ENCODE measurements at regions of chr20 and their contacts with region 1.

Region 1: DNA sequence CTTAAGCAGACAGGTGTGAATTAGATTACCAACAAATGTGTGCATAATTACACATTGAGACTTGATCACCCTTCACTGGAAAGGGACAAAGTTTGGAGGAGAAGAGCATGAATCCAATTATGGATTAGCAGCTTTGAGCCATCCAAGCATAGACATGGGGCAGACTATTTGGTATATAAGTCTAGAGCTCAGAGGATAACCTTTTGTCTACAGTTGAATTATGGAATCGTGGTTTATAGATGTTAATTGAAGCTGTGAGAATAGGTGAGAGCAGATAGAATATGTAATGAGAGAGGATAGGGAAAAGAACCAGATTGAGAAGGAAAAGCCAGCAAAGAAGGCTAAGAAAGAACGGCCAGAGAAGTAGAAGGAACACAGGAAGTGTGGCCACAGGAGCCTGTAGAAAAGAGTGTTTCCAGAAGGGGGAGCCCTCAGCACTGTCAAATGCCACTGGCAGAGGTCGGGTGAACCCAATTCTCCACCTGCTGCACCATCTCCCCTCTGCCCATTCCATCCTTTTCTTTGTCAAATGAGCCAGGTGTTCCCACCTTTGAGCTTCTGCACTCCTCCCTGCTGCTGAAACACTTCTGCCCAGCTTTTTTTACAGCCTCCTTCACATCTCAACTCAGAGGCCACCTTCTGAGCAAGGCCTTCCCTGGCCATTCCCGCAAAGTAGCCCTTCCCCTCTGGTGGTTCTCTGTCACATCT is 7.3 kb downstream of the DNTTIP1 start:
- DNase-seq: no peak
- H3K4me3 ChIP-seq: no peak overlapping the region
- CTCF ChIP-seq: peak; percentile 75

Region 2: GRCh38 chr20:45636513-45636912 is 162.6 kb before region 1 on chr20:
- CTCF ChIA-PET with region 1: no interaction called
- POLR2A ChIA-PET with region 1: no interaction called
- DNase-seq: no peak
- H3K4me3 ChIP-seq: no peak overlapping the region
- CTCF ChIP-seq: no peak

Region 3: GRCh38 chr20:45685896-45686295 is 113.2 kb before region 1 on chr20:
- CTCF ChIA-PET with region 1: no interaction called
- POLR2A ChIA-PET with region 1: no interaction called
- DNase-seq: no peak
- H3K4me3 ChIP-seq: no peak overlapping the region
- CTCF ChIP-seq: peak; percentile 6

Region 4: DNA sequence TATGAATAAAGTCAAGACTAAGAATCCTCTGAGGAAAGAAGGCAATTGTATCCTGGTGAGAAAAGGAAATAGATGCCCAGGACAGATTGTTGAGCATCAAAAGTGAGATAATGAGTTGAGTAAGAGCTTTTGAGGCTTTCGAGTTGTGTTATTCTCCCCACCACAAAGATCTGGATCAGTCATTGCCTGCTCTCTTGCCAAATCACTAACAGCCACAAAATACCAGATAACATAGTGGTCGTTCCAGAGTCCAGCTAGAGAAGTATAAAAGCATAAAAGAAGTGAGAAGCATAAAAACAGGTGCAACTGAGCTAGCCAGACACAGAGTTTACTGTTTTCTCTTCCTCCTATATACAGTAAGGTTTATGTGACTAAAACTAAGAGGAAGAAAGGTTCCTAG is 72.0 kb before region 1 on chr20:
- CTCF ChIA-PET with region 1: no interaction called
- POLR2A ChIA-PET with region 1: no interaction called
- DNase-seq: no peak
- H3K4me3 ChIP-seq: no peak overlapping the region
- CTCF ChIP-seq: no peak

Region 5: DNA sequence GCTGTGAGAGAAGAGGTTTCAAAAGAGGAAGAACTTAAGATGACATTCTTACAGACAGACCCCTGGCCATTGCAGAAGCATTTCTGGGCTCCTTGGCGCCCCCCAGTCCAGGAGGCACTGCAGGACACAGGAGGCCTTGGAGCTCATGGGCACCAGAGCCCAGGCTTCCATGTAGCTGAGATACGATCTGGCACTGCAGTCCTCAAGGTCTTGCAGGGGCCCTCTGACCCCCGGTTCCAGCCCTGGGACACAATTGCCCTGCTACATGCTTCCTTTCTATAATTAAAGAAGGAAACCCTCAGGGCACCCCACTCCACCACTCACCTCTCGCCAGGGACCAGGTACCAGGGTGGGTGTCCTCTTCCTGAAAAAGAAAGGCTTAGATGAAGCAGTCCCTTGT is 41.0 kb before region 1 on chr20:
- CTCF ChIA-PET with region 1: no interaction called
- POLR2A ChIA-PET with region 1: no interaction called
- DNase-seq: no peak
- H3K4me3 ChIP-seq: no peak overlapping the region
- CTCF ChIP-seq: no peak

Region 6: GRCh38 chr20:45779011-45779915 is 19.8 kb before region 1 on chr20:
- CTCF ChIA-PET with region 1: interaction called, 14 read pairs
- POLR2A ChIA-PET with region 1: no interaction called
- DNase-seq: peak; percentile 99
- H3K4me3 ChIP-seq: no peak overlapping the region
- CTCF ChIP-seq: no peak

Region 7: DNA sequence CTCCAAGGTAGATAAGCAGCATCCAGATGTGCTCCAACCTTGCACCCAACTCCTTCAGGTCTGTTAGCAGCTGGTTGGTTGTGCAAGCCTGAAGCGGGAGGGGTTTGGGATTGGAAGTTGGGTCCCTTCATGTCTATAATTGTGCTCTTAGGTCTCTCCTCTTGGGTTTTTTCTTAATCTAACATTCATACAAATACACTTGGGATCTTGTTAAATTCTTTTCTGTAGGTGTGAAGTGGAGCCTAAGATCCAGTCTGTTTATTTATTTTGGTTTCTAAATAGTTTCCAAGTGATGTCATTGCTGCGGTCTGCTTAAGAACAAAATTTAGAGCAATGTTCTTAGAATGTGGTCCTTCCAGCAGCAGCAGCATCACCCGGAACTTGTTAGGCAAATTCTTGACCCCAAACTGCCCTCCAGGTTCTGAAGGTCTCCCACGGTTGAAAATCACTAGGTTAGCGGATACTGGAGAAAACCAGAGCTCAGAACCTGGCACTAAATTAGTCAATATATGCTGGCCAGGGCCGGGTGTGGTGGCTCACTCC is 18.6 kb after region 1 on chr20:
- CTCF ChIA-PET with region 1: interaction called, 38 read pairs
- POLR2A ChIA-PET with region 1: no interaction called
- DNase-seq: peak; percentile 63
- H3K4me3 ChIP-seq: no peak overlapping the region
- CTCF ChIP-seq: no peak

Region 8: DNA sequence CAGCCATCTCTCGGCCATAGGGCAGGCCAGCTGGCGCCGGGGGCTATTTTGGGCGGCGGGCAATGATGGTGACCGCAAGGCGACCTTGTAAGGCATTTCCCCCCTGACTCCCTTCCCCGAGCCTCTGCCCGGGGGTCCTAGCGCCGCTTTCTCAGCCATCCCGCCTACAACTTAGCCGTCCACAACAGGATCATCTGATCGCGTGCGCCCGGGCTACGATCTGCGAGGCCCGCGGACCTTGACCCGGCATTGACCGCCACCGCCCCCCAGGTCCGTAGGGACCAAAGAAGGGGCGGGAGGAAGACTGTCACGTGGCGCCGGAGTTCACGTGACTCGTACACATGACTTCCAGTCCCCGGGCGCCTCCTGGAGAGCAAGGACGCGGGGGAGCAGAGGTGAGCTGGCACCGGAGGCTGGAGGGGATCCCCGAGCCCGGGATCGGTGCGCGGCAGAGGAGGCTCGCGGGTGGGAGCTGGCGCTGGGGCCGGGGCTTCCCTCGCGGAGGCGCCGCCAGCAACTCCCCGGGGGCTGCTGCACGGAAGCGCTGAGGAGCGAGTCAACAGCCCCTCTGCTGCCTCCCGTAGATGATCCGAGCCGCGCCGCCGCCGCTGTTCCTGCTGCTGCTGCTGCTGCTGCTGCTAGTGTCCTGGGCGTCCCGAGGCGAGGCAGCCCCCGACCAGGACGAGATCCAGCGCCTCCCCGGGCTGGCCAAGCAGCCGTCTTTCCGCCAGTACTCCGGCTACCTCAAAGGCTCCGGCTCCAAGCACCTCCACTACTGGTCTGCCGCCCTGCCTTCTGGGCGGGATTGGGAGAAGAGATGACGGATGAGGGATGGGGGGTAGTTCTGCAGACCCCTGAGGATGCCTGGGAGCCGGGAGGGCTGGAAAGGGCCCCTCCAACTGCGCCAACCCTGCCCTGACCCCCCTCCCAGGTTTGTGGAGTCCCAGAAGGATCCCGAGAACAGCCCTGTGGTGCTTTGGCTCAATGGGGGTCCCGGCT is 92.2 kb after region 1 on chr20 and contains the starts of genes CTSA and NEURL2:
- CTCF ChIA-PET with region 1: interaction called, 13 read pairs
- POLR2A ChIA-PET with region 1: no interaction called
- DNase-seq: peak; percentile 54
- H3K4me3 ChIP-seq: peak within 1 kb of the TSS; percentile 80
- CTCF ChIP-seq: peak; percentile 12

Region 9: GRCh38 chr20:45963059-45964005 is 164.2 kb after region 1 on chr20:
- CTCF ChIA-PET with region 1: interaction called, 63 read pairs
- POLR2A ChIA-PET with region 1: no interaction called
- DNase-seq: no peak
- H3K4me3 ChIP-seq: no peak overlapping the region
- CTCF ChIP-seq: peak; percentile 26